ENCODE measurements at regions of chr12 and their contacts with region 1.

Region 1: GRCh38 chr12:2613326-2614073 is 181.3 kb upstream of the FKBP4 start:
- DNase-seq: peak; percentile 94
- H3K4me3 ChIP-seq: no peak overlapping the region
- H3K27ac ChIP-seq: no peak overlapping the region
- H3K4me1 ChIP-seq: peaks cover 8% of the 10 kb centered on the region
- H3K27me3 ChIP-seq: no peaks in the 10 kb centered on the region
- CTCF ChIP-seq: no peak

Region 2: DNA sequence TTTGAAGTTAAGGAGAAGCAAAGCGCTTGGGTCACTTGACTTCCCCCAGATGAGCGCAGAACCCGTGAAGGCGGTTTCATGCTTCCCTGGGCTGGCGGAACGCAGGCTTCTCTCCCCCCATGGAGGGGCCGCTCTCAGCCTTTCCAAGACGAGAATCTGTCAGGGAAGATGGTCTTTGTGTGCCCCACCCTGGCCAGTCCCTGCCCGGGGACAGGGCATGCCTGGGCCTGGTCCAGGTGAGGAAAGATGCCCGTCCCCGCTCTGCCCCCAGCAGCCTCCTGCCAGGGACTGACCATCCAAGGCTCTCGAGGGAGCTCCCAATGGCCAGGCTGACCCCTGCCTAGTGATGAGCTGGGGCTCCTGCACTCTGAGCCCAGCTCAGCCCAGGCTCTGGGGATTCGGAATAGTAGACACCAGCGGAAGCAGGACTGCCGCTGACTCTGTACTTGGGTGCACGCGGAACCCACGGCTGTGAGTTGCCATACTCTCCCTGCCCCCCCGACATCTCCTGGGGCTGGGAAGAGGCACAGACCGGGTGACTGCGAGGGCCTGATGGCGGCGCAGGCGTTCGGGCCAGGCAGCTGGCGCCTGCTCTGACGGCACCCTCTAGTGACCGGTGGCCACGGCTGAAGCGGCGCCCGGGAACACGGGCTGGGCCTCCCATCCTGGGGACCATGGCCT is 39.0 kb after region 1 on chr12:
- CTCF ChIA-PET with region 1: no interaction called
- dilution Hi-C with region 1: loop called (anchors 5 kb)
- in situ Hi-C with region 1: no loop called
- intact Hi-C with region 1: no loop called
- DNase-seq: no peak
- H3K4me3 ChIP-seq: no peak overlapping the region
- H3K27ac ChIP-seq: no peak overlapping the region
- H3K4me1 ChIP-seq: no peaks in the 10 kb centered on the region
- H3K27me3 ChIP-seq: peaks cover 3% of the 10 kb centered on the region
- CTCF ChIP-seq: no peak

Region 3: GRCh38 chr12:2804393-2805142 is 191.1 kb after region 1 on chr12:
- CTCF ChIA-PET with region 1: no interaction called
- dilution Hi-C with region 1: no loop called
- in situ Hi-C with region 1: no loop called
- intact Hi-C with region 1: no loop called
- DNase-seq: no peak
- H3K4me3 ChIP-seq: no peak overlapping the region
- H3K27ac ChIP-seq: no peak overlapping the region
- H3K4me1 ChIP-seq: peaks cover 16% of the 10 kb centered on the region
- H3K27me3 ChIP-seq: no peaks in the 10 kb centered on the region
- CTCF ChIP-seq: no peak

Region 4: DNA sequence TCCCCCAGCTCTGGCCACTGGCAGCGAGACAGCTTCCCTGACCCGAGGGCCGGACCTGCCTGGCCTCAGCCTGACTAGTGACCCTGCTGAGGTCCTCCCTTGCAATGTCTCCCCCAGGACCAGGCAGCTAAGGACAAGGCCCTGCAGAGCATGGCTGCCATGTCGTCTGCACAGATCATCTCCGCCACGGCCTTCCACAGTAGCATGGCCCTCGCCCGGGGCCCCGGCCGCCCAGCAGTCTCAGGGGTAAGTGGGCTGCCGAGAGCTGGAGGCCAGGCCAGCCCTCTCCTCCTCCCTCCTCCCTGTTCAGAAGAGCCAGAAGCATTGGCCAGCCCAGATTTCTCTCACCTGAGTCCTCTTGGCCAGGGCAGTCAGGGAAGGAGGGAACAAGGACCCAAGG is 403.8 kb after region 1 on chr12:
- CTCF ChIA-PET with region 1: interaction called, 32 read pairs
- dilution Hi-C with region 1: no loop called
- in situ Hi-C with region 1: no loop called
- intact Hi-C with region 1: no loop called
- DNase-seq: no peak
- H3K4me3 ChIP-seq: no peak overlapping the region
- H3K27ac ChIP-seq: no peak overlapping the region
- H3K4me1 ChIP-seq: no peaks in the 10 kb centered on the region
- H3K27me3 ChIP-seq: no peaks in the 10 kb centered on the region
- CTCF ChIP-seq: no peak

Measured in mammary epithelial cell (primary cell).